Cardiac septum (tissue), 1 donor: ENCODE measurements at regions of chr10 and their contacts with region 1.

Region 1: GRCh38 chr10:97445722-97446639 is at the starts of genes EXOSC1 and ZDHHC16:
- DNase-seq: peak; percentile 97
- total RNA-seq, gene EXOSC1: 15.8 TPM
- total RNA-seq, gene ZDHHC16: 25.5 TPM

Region 2: GRCh38 chr10:97349752-97350513 is 96.0 kb before region 1 on chr10:
- intact Hi-C with region 1: no loop called
- DNase-seq: no peak

Region 3: GRCh38 chr10:97425964-97426775 is 19.8 kb before region 1 on chr10 and contains the start of gene PGAM1:
- intact Hi-C with region 1: loop called (anchors 2 kb)
- DNase-seq: peak; percentile 99
- total RNA-seq, gene PGAM1: 331 TPM

Region 4: GRCh38 chr10:97498076-97498840 is 52.3 kb after region 1 on chr10 and contains the start of gene MMS19:
- intact Hi-C with region 1: loop called (anchors 5 kb)
- DNase-seq: peak; percentile 100
- total RNA-seq, gene MMS19: 46.7 TPM